ENCODE measurements at regions of chr17 and their contacts with region 1.

Region 1: DNA sequence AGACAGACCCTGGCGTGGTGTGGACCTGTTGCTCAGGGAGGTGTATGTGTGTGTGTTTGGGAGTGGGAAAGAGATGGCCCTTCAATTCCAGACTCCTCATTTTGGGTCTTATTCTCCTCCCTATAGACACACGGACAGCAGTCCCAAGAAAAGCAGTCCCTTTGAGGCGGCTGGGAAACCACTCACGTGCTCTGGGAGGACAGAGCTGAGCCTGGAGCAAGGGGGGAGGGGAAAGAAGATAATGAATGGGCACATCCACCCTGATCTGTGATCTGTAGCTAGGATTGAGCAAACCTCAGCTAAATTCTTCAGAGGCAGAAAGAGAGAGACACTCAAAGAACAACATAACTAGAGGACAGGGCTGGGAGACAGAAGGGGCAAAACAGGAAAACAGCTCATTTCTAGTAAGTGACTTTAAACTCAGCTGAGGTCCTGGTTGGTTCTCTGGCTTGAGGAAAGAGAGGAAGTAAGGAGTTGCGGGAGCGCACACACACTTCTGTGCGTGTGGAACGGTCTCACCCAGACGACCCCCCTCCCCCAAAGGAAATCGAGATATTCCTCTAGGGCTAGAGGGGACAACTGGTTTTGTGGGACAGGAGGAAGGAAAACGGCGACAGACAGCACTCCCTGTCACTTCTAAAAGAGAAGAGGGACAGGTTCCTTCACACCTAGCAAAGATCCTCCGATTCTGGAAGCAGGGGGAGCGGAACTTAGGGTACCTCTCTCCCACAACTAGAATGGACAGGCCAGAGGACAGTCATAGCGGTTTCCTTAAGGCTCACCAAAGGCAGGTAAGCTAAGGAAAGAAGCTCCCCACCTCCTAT is 658 bp downstream of the RAB5C start:
- DNase-seq: no peak
- ATAC-seq: no peak
- H3K4me3 Mint-ChIP-seq: peak overlapping the region; percentile 83
- H3K27ac Mint-ChIP-seq: peak overlapping the region; percentile 79
- H3K4me1 Mint-ChIP-seq: peaks cover 28% of the 10 kb centered on the region
- H3K27me3 Mint-ChIP-seq: no peaks in the 10 kb centered on the region
- CTCF ChIP-seq: no peak

Region 2: GRCh38 chr17:42142371-42142896 is 11.7 kb before region 1 on chr17:
- CTCF ChIA-PET with region 1: interaction called, 7 read pairs
- POLR2A ChIA-PET with region 1: interaction called, 10 read pairs
- intact Hi-C with region 1: no loop called
- DNase-seq: no peak
- ATAC-seq: no peak
- H3K4me3 Mint-ChIP-seq: no peak overlapping the region
- H3K27ac Mint-ChIP-seq: no peak overlapping the region
- H3K4me1 Mint-ChIP-seq: peaks cover 30% of the 10 kb centered on the region
- H3K27me3 Mint-ChIP-seq: no peaks in the 10 kb centered on the region
- CTCF ChIP-seq: no peak

Measured in activated CD8-positive, alpha-beta T cell treated with anti-CD3 and anti-CD28 coated beads for 36 hours (primary cell).